K562 (cell line): ENCODE measurements at regions of chr15 and their contacts with region 1.

Region 1: DNA sequence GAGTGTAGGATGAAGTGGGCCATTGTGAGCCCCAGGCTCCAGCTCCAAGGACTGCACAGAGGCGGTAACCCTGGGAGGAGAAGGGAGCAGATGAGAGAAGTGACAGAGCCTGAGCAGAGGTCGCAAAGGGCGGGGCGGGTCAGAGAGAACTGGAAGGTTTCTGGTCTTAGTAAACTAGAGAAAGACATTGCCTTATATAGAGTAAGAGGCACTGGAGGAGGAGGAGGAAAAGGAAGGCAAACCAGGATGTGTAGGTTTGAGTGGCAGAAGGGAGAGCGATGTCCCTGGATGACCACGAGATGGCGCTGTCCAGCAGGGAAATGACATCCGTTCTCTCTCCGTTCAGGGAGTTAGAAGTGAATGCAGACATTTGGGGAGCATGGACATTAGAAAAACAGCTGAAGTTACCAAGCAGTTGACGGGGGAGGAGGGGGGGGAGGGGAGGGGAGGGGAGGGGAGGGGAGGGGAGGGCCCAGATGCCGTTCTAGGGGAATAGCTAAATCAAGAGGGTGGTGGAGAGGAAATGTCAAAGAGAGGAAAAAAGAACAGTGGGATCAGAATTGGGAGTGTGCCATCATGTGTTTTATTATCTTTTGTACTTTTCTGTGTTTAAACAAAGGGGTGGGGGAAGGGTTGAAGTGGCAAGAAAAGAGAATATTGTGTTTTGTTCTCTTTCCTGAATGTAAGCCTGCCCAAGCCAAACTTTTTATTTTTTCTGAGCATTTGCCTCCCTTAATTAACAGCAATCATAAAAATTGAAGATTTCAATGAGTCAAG is 48.8 kb downstream of the STARD5 start:
- DNase-seq: peak; percentile 75 to 86 (median 76)
- ATAC-seq: peak; percentile 98
- H3K4me3 ChIP-seq: no peak overlapping the region
- H3K27ac ChIP-seq: no peak overlapping the region
- H3K4me1 ChIP-seq: no peaks in the 10 kb centered on the region; a peak in 1 of 5 replicates
- H3K27me3 ChIP-seq: no peaks in the 10 kb centered on the region
- CTCF ChIP-seq: peak; percentile 84 to 94 (median 87)
- EP300 ChIP-seq: no peak
- POLR2A ChIP-seq: no peak
- RAD21 ChIP-seq: peak; percentile 70 to 85

Region 2: GRCh38 chr15:81334768-81335435 is 59.8 kb after region 1 on chr15:
- CTCF ChIA-PET with region 1: interaction called, 5 read pairs
- POLR2A ChIA-PET with region 1: no interaction called
- in situ Hi-C with region 1: no loop called
- intact Hi-C with region 1: loop called (anchors 1 kb)
- DNase-seq: no peak
- ATAC-seq: no peak
- H3K4me3 ChIP-seq: no peak overlapping the region
- H3K27ac ChIP-seq: no peak overlapping the region
- H3K4me1 ChIP-seq: peaks cover 4 to 9% of the 10 kb centered on the region in 2 experiments; a peak in 2 of 5 replicates
- H3K27me3 ChIP-seq: peaks cover 0 to 14% of the 10 kb centered on the region in 2 experiments; a peak in 1 of 5 replicates
- CTCF ChIP-seq: no peak
- EP300 ChIP-seq: no peak
- POLR2A ChIP-seq: no peak
- RAD21 ChIP-seq: no peak

Region 3: GRCh38 chr15:81473177-81473576 is 198.1 kb after region 1 on chr15:
- CTCF ChIA-PET with region 1: no interaction called
- POLR2A ChIA-PET with region 1: no interaction called
- in situ Hi-C with region 1: no loop called
- intact Hi-C with region 1: loop called (anchors 10 kb)
- DNase-seq: no peak
- ATAC-seq: no peak
- H3K4me3 ChIP-seq: no peak overlapping the region
- H3K27ac ChIP-seq: no peak overlapping the region
- H3K4me1 ChIP-seq: no peaks in the 10 kb centered on the region
- H3K27me3 ChIP-seq: peaks cover 2 to 8% of the 10 kb centered on the region in 2 experiments; a peak in 2 of 5 replicates
- CTCF ChIP-seq: no peak
- EP300 ChIP-seq: no peak
- POLR2A ChIP-seq: no peak
- RAD21 ChIP-seq: no peak

Region 4: DNA sequence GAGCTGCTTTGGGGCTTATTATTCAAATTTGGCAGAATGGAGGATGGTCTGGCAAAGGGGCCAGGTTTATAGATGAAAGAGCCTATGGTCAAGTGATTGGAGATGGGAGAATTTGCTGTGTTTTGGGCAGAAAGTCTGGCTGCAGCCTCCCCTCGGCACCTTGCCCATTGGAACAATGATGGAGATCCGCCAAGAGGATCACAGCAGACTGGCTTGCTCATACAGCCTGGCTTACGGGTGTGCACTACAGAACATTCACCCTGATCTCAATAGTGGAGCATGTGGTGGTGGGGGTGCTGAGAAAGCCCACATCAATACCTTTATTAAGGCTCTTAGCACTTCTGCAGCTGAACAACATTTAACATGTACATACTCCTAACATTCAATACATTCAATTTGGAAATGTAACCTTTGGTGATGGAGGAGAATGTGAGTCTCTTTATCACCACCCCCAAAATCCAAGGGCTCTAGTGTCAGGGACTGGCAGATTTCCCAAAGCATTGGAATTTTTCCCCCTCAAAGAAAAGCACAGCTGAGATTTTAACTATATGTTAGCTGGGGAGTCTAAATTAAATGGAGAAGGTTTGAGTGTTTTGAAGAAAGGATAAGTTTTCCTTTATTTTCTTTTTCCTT is 217.3 kb after region 1 on chr15:
- CTCF ChIA-PET with region 1: no interaction called
- POLR2A ChIA-PET with region 1: no interaction called
- in situ Hi-C with region 1: no loop called
- intact Hi-C with region 1: no loop called
- DNase-seq: no peak
- ATAC-seq: no peak
- H3K4me3 ChIP-seq: no peak overlapping the region
- H3K27ac ChIP-seq: no peak overlapping the region
- H3K4me1 ChIP-seq: no peaks in the 10 kb centered on the region
- H3K27me3 ChIP-seq: peaks cover 0 to 22% of the 10 kb centered on the region in 2 experiments; a peak in 2 of 5 replicates
- CTCF ChIP-seq: no peak
- EP300 ChIP-seq: no peak
- POLR2A ChIP-seq: no peak
- RAD21 ChIP-seq: no peak